SK-N-SH (cell line): ENCODE measurements at regions of chr10 and their contacts with region 1.

Region 1: GRCh38 chr10:70461215-70461986 is 17.2 kb upstream of the PALD1 start:
- DNase-seq: peak; percentile 85
- H3K4me3 ChIP-seq: no peak overlapping the region; a peak in 1 of 4 replicates
- H3K27ac ChIP-seq: no peak overlapping the region
- H3K4me1 ChIP-seq: peaks cover 0 to 24% of the 10 kb centered on the region in 2 experiments; a peak in 1 of 4 replicates
- H3K27me3 ChIP-seq: peaks cover 8% of the 10 kb centered on the region; the same call in 1 of the 2 replicates
- CTCF ChIP-seq: peak; percentile 82
- EP300 ChIP-seq: no peak
- RAD21 ChIP-seq: peak; percentile 94

Region 2: GRCh38 chr10:70445718-70446657 is 15.4 kb before region 1 on chr10:
- CTCF ChIA-PET with region 1: interaction called, 19 read pairs
- POLR2A ChIA-PET with region 1: no interaction called
- DNase-seq: no peak
- H3K4me3 ChIP-seq: no peak overlapping the region
- H3K27ac ChIP-seq: peak overlapping the region in 1 of 2 experiments; percentile 5; a peak in 1 of 4 replicates
- H3K4me1 ChIP-seq: peaks cover 0 to 8% of the 10 kb centered on the region in 2 experiments; a peak in 1 of 4 replicates
- H3K27me3 ChIP-seq: peaks cover 17% of the 10 kb centered on the region
- CTCF ChIP-seq: no peak
- EP300 ChIP-seq: peak; percentile 23; a peak in 1 of 4 replicates
- RAD21 ChIP-seq: no peak

Region 3: DNA sequence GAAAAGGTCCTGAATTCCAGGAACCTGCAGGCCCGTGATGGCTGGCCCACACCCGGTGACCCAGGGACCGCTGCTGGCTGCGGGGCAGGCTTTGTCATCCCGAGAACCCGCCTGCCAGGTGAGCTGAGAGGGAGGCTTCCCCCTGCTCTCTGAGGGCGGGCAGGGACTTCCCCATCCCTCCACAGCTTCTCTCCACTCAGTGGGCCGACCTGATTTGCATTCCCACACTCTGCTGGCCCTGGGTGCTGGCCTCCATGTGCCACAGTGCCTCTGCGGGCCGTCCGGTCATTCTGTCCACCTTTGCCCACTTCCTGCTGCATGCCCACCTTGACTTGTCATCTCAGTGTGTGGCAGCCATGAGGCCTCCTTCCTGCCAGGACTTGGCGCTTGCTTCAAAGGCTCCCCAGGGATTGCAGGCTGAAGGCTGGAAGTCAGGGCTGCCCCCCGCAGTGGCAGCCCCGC is 52.5 kb after region 1 on chr10:
- CTCF ChIA-PET with region 1: interaction called, 16 read pairs
- POLR2A ChIA-PET with region 1: interaction called, 3 read pairs
- DNase-seq: no peak
- H3K4me3 ChIP-seq: no peak overlapping the region
- H3K27ac ChIP-seq: no peak overlapping the region
- H3K4me1 ChIP-seq: peaks cover 0 to 29% of the 10 kb centered on the region in 2 experiments; a peak in 1 of 4 replicates
- H3K27me3 ChIP-seq: no peaks in the 10 kb centered on the region; the same call in 1 of the 2 replicates
- CTCF ChIP-seq: no peak
- EP300 ChIP-seq: no peak
- RAD21 ChIP-seq: no peak

Region 4: GRCh38 chr10:70540089-70540788 is 78.8 kb after region 1 on chr10:
- CTCF ChIA-PET with region 1: interaction called, 190 read pairs
- POLR2A ChIA-PET with region 1: no interaction called
- DNase-seq: peak; percentile 87
- H3K4me3 ChIP-seq: no peak overlapping the region; a peak in 1 of 4 replicates
- H3K27ac ChIP-seq: no peak overlapping the region
- H3K4me1 ChIP-seq: no peaks in the 10 kb centered on the region
- H3K27me3 ChIP-seq: 0 out of 2 replicates have a peak, but pooled peaks cover 11% of the 10 kb centered on the region
- CTCF ChIP-seq: peak; percentile 72
- EP300 ChIP-seq: no peak
- RAD21 ChIP-seq: peak; percentile 81

Region 5: GRCh38 chr10:70656489-70656888 is 195.1 kb after region 1 on chr10:
- CTCF ChIA-PET with region 1: no interaction called
- POLR2A ChIA-PET with region 1: no interaction called
- DNase-seq: no peak
- H3K4me3 ChIP-seq: no peak overlapping the region
- H3K27ac ChIP-seq: peak overlapping the region in 1 of 2 experiments; percentile 98; a peak in 3 of 4 replicates
- H3K4me1 ChIP-seq: peaks cover 9 to 10% of the 10 kb centered on the region in 2 experiments; a peak in 3 of 4 replicates
- H3K27me3 ChIP-seq: no peaks in the 10 kb centered on the region
- CTCF ChIP-seq: no peak
- EP300 ChIP-seq: peak in 1 of 2 experiments; percentile 84; a peak in 3 of 4 replicates
- RAD21 ChIP-seq: no peak

Region 6: DNA sequence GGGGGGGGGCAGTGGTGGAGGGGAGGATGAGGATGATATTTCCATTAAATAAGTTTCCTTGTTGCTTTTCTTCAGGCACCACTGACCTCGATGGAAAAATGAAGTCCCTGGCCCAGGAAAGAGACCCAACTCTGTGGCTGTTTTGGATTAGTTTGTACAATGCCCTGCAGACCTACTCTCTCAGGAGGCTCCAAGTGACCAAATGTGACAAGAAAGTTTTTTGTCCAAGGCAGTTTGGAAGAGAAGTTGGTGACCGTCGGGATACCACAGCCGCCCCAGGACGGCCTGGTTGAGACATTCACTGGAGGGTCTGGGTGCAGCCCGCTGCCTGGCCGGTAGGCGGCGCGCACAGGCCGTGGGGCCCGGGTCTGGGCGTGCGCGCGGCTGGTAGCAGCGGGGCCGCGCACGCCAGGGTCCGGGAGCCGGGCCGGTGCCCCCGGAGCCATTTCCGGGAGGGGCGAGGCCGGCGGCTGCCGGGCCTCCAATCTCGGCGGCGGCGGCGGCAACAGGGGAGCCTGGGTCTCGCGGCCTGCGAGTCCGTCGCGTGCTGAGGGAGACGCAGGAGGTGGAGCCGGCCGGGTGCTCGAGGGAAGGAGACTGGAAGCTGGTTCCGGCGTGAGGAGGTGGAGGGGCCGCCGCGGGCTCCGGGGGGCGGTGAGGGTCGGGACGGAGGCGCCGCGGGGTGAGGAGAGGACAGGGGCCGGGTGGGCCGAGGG is 354.3 kb after region 1 on chr10 and contains the start of gene SGPL1:
- CTCF ChIA-PET with region 1: interaction called, 12 read pairs
- POLR2A ChIA-PET with region 1: no interaction called
- DNase-seq: peak; percentile 99
- H3K4me3 ChIP-seq: peak within 1 kb of the TSS; percentile 66 to 89
- H3K27ac ChIP-seq: peak within 1 kb of the TSS; percentile 92 to 96
- H3K4me1 ChIP-seq: peaks cover 5 to 11% of the 10 kb centered on the region in 2 experiments; a peak in 3 of 4 replicates
- H3K27me3 ChIP-seq: no peaks in the 10 kb centered on the region
- CTCF ChIP-seq: peak; percentile 85
- EP300 ChIP-seq: no peak
- RAD21 ChIP-seq: peak; percentile 89
- polyA plus RNA-seq, gene SGPL1: 11.8 and 15.6 TPM in 2 replicates